ENCODE measurements at regions of chr14 and their contacts with region 1.

Region 1: GRCh38 chr14:20662968-20663732 is 21.2 kb upstream of the RNASE4 start:
- DNase-seq: peak; percentile 96
- H3K4me3 ChIP-seq: peak overlapping the region; percentile 70 to 89 (median 84)
- H3K27ac ChIP-seq: no peak overlapping the region
- H3K4me1 ChIP-seq: peaks cover 0 to 1% (median under 1%) of the 10 kb centered on the region in 4 experiments; a peak in 4 of 7 replicates
- H3K27me3 ChIP-seq: peaks cover 0 to 3% (median 0%) of the 10 kb centered on the region in 4 experiments; a peak in 1 of 7 replicates
- CTCF ChIP-seq: peak; percentile 57 to 86 (median 83)
- EP300 ChIP-seq: no peak
- POLR2A ChIP-seq: no peak
- RAD21 ChIP-seq: peak; percentile 69 to 72

Region 2: DNA sequence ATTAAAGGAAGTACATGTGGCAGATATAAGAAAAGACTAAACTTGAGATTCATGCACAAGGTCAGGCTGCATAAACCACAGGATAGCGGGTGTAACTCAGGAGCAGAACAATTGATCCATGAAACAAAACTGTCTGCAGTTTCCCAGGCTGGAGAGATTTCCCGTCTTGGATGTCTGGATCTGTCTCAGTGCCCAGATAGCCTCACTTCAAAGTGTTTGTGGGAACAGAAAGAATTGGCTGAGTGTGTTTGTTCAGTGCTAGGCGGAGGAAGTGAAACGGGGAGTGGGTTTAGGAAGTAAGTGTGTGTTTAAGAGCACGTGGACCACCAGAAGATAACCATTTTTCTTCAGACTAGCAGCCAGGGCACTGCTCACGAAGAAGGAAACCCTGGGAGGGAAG is 159.3 kb before region 1 on chr14:
- CTCF ChIA-PET with region 1: no interaction called
- POLR2A ChIA-PET with region 1: no interaction called
- DNase-seq: no peak
- H3K4me3 ChIP-seq: no peak overlapping the region
- H3K27ac ChIP-seq: no peak overlapping the region
- H3K4me1 ChIP-seq: peaks cover 0 to 5% (median 2%) of the 10 kb centered on the region in 4 experiments; a peak in 4 of 7 replicates
- H3K27me3 ChIP-seq: no peaks in the 10 kb centered on the region
- CTCF ChIP-seq: no peak
- EP300 ChIP-seq: no peak
- POLR2A ChIP-seq: no peak
- RAD21 ChIP-seq: no peak

Region 3: GRCh38 chr14:20682435-20683124 is 19.4 kb after region 1 on chr14:
- CTCF ChIA-PET with region 1: interaction called, 282 read pairs
- POLR2A ChIA-PET with region 1: interaction called, 17 read pairs
- DNase-seq: peak in 1 of 2 experiments; percentile 76
- H3K4me3 ChIP-seq: peak overlapping the region; percentile 67 to 99 (median 98)
- H3K27ac ChIP-seq: peak overlapping the region; percentile 62; the same call in 1 of the 2 replicates
- H3K4me1 ChIP-seq: peaks cover 0 to 6% (median 4%) of the 10 kb centered on the region in 4 experiments; a peak in 5 of 7 replicates
- H3K27me3 ChIP-seq: no peaks in the 10 kb centered on the region
- CTCF ChIP-seq: no peak
- EP300 ChIP-seq: no peak
- POLR2A ChIP-seq: peak; percentile 42 to 60
- RAD21 ChIP-seq: no peak

Region 4: DNA sequence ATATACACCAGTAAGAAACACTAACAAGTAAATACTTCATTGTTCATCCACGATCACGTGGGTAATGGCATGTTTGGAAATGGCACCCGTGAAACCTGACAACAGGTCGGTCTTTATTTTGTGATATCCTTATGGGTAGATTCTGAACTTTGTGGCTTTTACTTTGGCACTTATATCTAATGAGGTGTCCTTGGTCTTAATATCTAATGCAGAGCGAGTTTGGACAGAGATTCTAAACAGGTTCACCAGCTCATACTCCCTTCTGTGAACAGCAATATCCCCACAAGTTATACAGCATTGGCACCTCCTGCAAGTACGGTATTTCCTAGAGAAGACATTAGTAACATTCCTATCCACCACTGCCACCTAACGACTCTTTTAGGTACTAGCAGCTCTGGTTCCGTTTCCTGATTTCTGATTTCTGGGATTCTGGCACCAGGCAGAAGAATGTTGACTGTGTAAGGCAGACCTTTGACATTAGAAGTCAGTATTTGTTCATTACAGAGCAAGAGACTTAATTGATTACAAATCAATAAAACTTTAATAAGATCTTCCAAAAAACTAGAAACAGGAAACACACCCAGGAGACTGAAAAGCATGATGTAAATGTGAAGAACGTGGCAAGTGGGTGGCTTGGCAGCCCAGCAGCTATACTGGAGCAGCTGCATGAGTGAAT is 27.8 kb after region 1 on chr14:
- CTCF ChIA-PET with region 1: interaction called, 282 read pairs
- POLR2A ChIA-PET with region 1: no interaction called
- DNase-seq: peak in 1 of 2 experiments; percentile 61
- H3K4me3 ChIP-seq: no peak overlapping the region
- H3K27ac ChIP-seq: no peak overlapping the region
- H3K4me1 ChIP-seq: no peaks in the 10 kb centered on the region
- H3K27me3 ChIP-seq: no peaks in the 10 kb centered on the region
- CTCF ChIP-seq: peak in 2 of 3 experiments; percentile 78 to 86; a peak in 3 of 4 replicates
- EP300 ChIP-seq: no peak
- POLR2A ChIP-seq: no peak
- RAD21 ChIP-seq: peak; percentile 89 to 92

Region 5: GRCh38 chr14:20907214-20907613 is 244.1 kb after region 1 on chr14:
- CTCF ChIA-PET with region 1: no interaction called
- POLR2A ChIA-PET with region 1: no interaction called
- DNase-seq: no peak
- H3K4me3 ChIP-seq: no peak overlapping the region
- H3K27ac ChIP-seq: no peak overlapping the region
- H3K4me1 ChIP-seq: peaks cover 0 to 3% (median 0%) of the 10 kb centered on the region in 4 experiments; a peak in 1 of 7 replicates
- H3K27me3 ChIP-seq: no peaks in the 10 kb centered on the region
- CTCF ChIP-seq: no peak
- EP300 ChIP-seq: no peak
- POLR2A ChIP-seq: no peak
- RAD21 ChIP-seq: no peak

Measured in H1 (cell line).